Right cardiac atrium (tissue), 5 donors: ENCODE measurements at regions of chr21 and their contacts with region 1.

Region 1: GRCh38 chr21:16082038-16082816 is 352.4 kb downstream of the USP25 start:
- DNase-seq: no peak
- ATAC-seq: no peak
- H3K4me3 ChIP-seq: peak overlapping the region; percentile 45
- H3K27ac ChIP-seq: no peak overlapping the region
- H3K4me1 ChIP-seq: no peaks in the 10 kb centered on the region
- H3K27me3 ChIP-seq: no peaks in the 10 kb centered on the region

Region 2: DNA sequence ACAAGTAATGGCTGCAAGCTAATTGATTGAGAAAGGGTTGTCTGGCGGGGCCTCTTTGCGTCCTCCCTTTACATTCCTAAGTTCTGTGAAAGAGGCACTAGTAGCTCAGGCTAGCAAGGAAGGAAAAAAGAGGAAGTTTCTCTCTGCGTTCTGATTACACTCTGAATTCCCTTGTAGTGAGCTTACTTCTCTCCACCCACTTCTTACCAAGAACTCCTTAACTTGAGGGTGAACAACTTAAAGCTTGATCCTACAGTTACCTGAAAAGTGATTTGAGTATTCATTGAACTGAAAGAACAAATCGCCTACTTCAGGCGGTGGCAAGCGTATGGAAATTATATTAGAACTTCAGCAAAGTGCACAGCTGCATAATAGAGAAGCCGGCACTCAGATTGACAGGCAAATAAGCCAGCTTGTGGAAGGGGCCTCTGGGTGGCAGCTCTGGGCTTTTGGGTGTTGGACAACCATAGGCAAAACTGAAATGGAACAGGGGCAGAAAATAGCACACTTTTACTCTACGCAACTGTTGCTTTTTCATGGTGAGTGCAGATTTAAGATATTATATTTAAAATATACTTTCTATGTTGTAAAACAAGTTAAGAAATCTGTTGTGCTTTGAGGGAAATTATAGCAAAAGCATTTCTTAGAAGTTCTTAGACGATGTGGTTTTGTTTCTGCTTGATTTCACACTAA is 112.0 kb after region 1 on chr21:
- intact Hi-C with region 1: loop called in 1 of 4 experiments (anchors 10 kb)
- DNase-seq: peak; percentile 70 to 88 (median 79)
- ATAC-seq: peak; percentile 88 to 93
- H3K4me3 ChIP-seq: peak overlapping the region; percentile 95
- H3K27ac ChIP-seq: peak overlapping the region; percentile 79
- H3K4me1 ChIP-seq: peaks cover 5% of the 10 kb centered on the region
- H3K27me3 ChIP-seq: no peaks in the 10 kb centered on the region

Region 3: DNA sequence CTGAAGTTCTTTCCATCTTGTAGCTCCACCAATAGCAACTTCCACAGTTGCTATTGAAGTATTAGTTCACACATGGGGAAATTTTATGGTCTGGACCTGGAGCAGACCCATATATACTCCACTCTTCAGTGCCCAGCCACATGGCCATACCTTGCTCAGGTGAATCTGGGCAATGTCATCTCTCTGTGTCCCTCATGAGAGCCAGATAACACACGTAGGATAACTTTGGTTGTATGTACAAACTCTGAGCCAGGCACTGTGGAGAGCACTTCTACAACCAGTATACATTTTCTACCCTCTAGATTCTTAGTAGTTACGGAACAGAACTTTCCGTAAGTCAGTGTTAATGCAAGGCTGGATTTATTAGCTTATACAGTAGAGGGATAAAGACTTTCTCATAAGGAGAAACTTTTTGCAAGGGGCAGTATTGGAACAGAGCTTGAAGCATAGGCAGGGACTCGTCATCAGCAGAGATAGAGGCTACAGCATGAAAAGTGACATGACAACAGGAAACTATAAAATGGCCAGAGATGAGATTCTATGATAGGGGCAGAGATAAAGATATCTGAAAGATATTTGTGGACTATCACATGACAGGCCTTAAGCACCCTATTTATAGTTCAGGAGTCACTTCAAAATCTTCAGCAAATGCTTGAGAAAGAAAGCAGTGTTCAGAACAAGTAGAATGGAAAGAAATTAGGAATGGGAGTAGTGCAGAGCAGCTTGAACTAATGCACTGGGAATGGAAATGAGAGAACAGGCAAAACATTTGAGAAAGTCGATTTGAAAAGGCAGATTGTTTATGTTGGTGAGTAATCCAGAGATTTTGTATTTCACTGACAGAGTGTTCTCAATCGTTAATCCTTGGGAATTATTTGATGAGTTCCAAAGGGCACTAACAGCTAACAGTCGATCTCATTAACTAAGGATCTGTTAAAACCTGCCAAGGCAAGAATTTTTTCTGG is 129.4 kb after region 1 on chr21:
- intact Hi-C with region 1: loop called in 1 of 4 experiments (anchors 10 kb)
- DNase-seq: no peak
- ATAC-seq: peak; percentile 69 to 76
- H3K4me3 ChIP-seq: no peak overlapping the region
- H3K27ac ChIP-seq: peak overlapping the region; percentile 20
- H3K4me1 ChIP-seq: no peaks in the 10 kb centered on the region
- H3K27me3 ChIP-seq: no peaks in the 10 kb centered on the region

Region 4: DNA sequence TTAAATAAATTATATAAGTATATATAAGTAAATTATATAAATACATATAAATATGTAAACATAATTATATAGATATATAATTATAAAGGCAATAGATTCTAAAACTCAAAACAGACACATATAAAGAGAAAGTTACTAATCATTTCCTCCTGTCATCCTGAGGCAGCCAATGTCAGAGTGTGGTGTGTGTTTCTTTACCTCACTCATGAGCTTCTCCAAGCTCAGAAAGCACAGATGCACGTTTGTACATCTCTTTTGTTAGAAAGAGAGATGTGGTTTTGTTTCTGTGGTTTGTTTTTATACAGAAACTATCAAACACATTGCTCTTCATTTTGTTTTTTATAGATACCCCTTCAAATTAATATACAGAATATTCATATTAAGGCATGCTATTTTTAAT is 242.4 kb after region 1 on chr21:
- intact Hi-C with region 1: loop called in 1 of 4 experiments (anchors 5 kb)
- DNase-seq: no peak
- ATAC-seq: no peak
- H3K4me3 ChIP-seq: no peak overlapping the region
- H3K27ac ChIP-seq: no peak overlapping the region
- H3K4me1 ChIP-seq: no peaks in the 10 kb centered on the region
- H3K27me3 ChIP-seq: no peaks in the 10 kb centered on the region

Region 5: GRCh38 chr21:16330082-16330907 is 248.1 kb after region 1 on chr21:
- intact Hi-C with region 1: loop called in 3 of 4 experiments (anchors 5 to 10 kb)
- DNase-seq: no peak
- ATAC-seq: peak; percentile 97 to 99
- H3K4me3 ChIP-seq: peak overlapping the region; percentile 9
- H3K27ac ChIP-seq: no peak overlapping the region
- H3K4me1 ChIP-seq: no peaks in the 10 kb centered on the region
- H3K27me3 ChIP-seq: no peaks in the 10 kb centered on the region